HCT116 (cell line): ENCODE measurements at regions of chr2 and their contacts with region 1.

Region 1: DNA sequence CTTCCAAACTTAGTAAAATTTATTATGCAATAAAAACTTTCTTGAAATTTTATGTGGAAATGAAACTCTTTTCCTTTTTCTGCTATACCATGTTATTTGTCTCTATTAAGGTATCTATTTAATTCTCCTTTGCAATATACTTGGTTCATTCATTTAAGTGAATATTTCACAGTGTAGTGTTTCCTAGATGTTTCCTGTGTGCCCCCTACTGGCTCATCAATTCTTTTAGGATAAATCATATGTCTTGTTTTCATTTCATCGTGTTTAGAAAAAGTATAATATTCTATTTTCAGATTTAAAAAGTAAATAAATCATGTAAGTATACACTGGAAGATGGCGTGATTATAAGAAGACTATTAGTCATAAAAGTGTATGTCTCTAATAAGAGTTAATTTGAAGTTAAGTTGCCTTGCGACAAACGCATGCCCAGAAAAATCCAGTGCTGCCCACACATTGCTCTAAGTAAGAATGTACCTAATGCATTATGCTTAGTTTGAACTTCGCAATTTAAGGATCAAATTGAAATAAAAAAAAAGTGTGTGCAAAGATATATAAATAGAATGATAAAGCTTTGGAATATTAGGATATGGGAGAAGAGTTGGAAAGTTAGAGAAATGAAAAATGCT is 525.4 kb downstream of the KCNJ3 start:
- DNase-seq: peak; percentile 26
- ATAC-seq: peak; percentile 87
- H3K4me3 ChIP-seq: no peak overlapping the region
- H3K27ac ChIP-seq: no peak overlapping the region
- H3K4me1 ChIP-seq: no peaks in the 10 kb centered on the region
- H3K27me3 ChIP-seq: no peaks in the 10 kb centered on the region
- CTCF ChIP-seq: peak; percentile 60 to 62 (median 60)
- POLR2A ChIP-seq: no peak
- RAD21 ChIP-seq: peak; percentile 77

Region 2: GRCh38 chr2:154402218-154402617 is 821.7 kb before region 1 on chr2:
- CTCF ChIA-PET with region 1: interaction called, 3 read pairs
- POLR2A ChIA-PET with region 1: no interaction called
- RAD21 ChIA-PET with region 1: no interaction called
- intact Hi-C with region 1: loop called (anchors 10 kb)
- DNase-seq: peak; percentile 43
- ATAC-seq: peak; percentile 67; the same call in 1 of the 2 replicates
- H3K4me3 ChIP-seq: no peak overlapping the region
- H3K27ac ChIP-seq: no peak overlapping the region
- H3K4me1 ChIP-seq: no peaks in the 10 kb centered on the region
- H3K27me3 ChIP-seq: no peaks in the 10 kb centered on the region
- CTCF ChIP-seq: peak; percentile 25 to 65 (median 55); a peak in 5 of 6 replicates
- POLR2A ChIP-seq: no peak
- RAD21 ChIP-seq: peak; percentile 53

Region 3: DNA sequence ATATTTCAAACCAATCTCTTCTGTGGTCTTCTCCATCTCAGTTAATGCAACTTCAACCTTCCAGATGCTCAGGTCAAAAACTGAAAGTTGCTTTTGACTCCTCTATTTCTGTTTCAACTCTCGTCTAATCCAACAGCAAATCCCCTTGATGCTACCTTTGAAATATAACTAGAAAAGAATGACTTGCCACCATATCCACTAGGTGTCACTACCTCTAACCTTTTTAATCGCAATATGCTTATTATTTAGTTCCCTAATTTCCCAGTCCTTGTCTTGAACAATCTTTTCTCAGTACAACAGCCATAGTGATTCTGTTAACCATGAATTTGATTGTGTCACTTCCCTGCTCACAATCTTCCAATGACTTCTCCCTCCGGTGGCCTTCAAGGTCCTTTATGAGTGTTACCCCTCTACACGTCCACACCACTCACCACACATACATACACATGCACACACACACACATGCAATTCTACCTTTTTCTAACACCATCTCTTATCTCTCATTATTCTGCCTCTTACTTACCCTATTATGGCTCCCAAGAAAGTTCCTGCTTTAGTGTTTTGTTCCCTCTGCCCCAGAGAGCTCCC is 770.9 kb before region 1 on chr2:
- CTCF ChIA-PET with region 1: no interaction called
- POLR2A ChIA-PET with region 1: no interaction called
- RAD21 ChIA-PET with region 1: no interaction called
- intact Hi-C with region 1: loop called (anchors 2 kb)
- DNase-seq: peak; percentile 27
- ATAC-seq: peak; percentile 77; the same call in 1 of the 2 replicates
- H3K4me3 ChIP-seq: no peak overlapping the region
- H3K27ac ChIP-seq: no peak overlapping the region
- H3K4me1 ChIP-seq: no peaks in the 10 kb centered on the region
- H3K27me3 ChIP-seq: no peaks in the 10 kb centered on the region
- CTCF ChIP-seq: peak; percentile 30 to 69 (median 38); a peak in 4 of 6 replicates
- POLR2A ChIP-seq: no peak
- RAD21 ChIP-seq: peak; percentile 57

Region 4: GRCh38 chr2:154623819-154624218 is 600.1 kb before region 1 on chr2:
- CTCF ChIA-PET with region 1: interaction called, 11 read pairs
- POLR2A ChIA-PET with region 1: no interaction called
- RAD21 ChIA-PET with region 1: no interaction called
- intact Hi-C with region 1: loop called (anchors 1 kb)
- DNase-seq: peak; percentile 56
- ATAC-seq: peak; percentile 80
- H3K4me3 ChIP-seq: no peak overlapping the region
- H3K27ac ChIP-seq: no peak overlapping the region
- H3K4me1 ChIP-seq: peaks cover 0 to 8% of the 10 kb centered on the region in 2 experiments; a peak in 1 of 4 replicates
- H3K27me3 ChIP-seq: no peaks in the 10 kb centered on the region
- CTCF ChIP-seq: peak; percentile 58 to 85 (median 80); a peak in 5 of 6 replicates
- POLR2A ChIP-seq: no peak
- RAD21 ChIP-seq: peak; percentile 74

Region 5: GRCh38 chr2:154855085-154855484 is 368.8 kb before region 1 on chr2:
- CTCF ChIA-PET with region 1: no interaction called
- POLR2A ChIA-PET with region 1: no interaction called
- RAD21 ChIA-PET with region 1: no interaction called
- intact Hi-C with region 1: no loop called
- DNase-seq: no peak
- ATAC-seq: no peak
- H3K4me3 ChIP-seq: no peak overlapping the region
- H3K27ac ChIP-seq: no peak overlapping the region
- H3K4me1 ChIP-seq: no peaks in the 10 kb centered on the region
- H3K27me3 ChIP-seq: no peaks in the 10 kb centered on the region
- CTCF ChIP-seq: no peak
- POLR2A ChIP-seq: no peak
- RAD21 ChIP-seq: no peak